ENCODE measurements at regions of chr5 and their contacts with region 1.

Region 1: GRCh38 chr5:33439905-33440481 is 772 bp upstream of the TARS1 start:
- DNase-seq: no peak
- H3K4me3 ChIP-seq: peak overlapping the region; percentile 86
- H3K27ac ChIP-seq: peak overlapping the region; percentile 39 to 93
- H3K4me1 ChIP-seq: peaks cover 6% of the 10 kb centered on the region
- H3K27me3 ChIP-seq: no peaks in the 10 kb centered on the region
- CTCF ChIP-seq: no peak
- EP300 ChIP-seq: no peak
- POLR2A ChIP-seq: no peak

Region 2: GRCh38 chr5:33008751-33009418 is 431.1 kb before region 1 on chr5:
- intact Hi-C with region 1: no loop called
- DNase-seq: no peak
- H3K4me3 ChIP-seq: no peak overlapping the region
- H3K27ac ChIP-seq: no peak overlapping the region
- H3K4me1 ChIP-seq: no peaks in the 10 kb centered on the region
- H3K27me3 ChIP-seq: no peaks in the 10 kb centered on the region
- CTCF ChIP-seq: no peak
- EP300 ChIP-seq: no peak
- POLR2A ChIP-seq: no peak

Region 3: GRCh38 chr5:33479311-33479710 is 39.3 kb after region 1 on chr5:
- intact Hi-C with region 1: no loop called
- DNase-seq: no peak
- H3K4me3 ChIP-seq: no peak overlapping the region
- H3K27ac ChIP-seq: no peak overlapping the region
- H3K4me1 ChIP-seq: no peaks in the 10 kb centered on the region
- H3K27me3 ChIP-seq: no peaks in the 10 kb centered on the region
- CTCF ChIP-seq: no peak
- EP300 ChIP-seq: no peak
- POLR2A ChIP-seq: no peak

Region 4: DNA sequence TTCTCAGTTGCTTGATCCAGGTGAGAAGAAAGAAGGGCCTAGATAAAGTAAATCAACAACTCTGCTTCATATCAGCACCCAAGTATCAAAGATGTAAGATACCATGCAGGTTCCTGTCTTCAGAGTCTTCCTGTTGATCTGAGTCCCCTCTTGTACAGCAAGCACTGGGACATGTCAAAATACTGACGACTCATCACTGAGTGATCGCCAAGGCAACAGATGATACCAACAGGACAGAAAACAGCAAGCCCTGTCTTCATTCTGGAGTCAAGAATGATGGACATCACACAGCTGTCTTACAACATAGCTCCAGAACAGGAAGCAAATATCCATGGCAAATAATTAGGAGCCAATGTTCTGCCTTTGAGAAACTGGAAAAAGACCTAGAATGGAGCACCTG is 84.5 kb after region 1 on chr5:
- intact Hi-C with region 1: no loop called
- DNase-seq: no peak
- H3K4me3 ChIP-seq: no peak overlapping the region
- H3K27ac ChIP-seq: no peak overlapping the region
- H3K4me1 ChIP-seq: no peaks in the 10 kb centered on the region
- H3K27me3 ChIP-seq: no peaks in the 10 kb centered on the region
- CTCF ChIP-seq: no peak
- EP300 ChIP-seq: no peak
- POLR2A ChIP-seq: no peak

Region 5: DNA sequence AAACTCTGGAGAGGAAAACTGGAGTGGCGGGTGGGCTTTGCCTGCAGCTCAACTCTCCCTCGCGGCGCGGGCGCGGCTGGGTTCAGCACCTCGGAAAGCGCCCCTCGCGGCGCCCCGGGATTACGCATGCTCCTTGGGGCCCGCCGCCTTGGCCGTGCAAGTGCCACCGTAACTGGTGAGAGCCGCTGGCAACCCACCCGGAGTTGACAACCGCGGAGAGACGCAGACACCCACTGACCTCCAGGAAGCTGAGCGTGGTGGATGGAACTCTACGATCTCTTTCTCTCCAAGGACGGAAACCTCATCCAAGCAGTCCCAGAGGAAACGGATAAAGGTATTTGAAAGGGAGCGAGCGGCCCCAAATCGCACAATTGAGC is 496.0 kb after region 1 on chr5:
- intact Hi-C with region 1: loop called in 1 of 4 experiments (anchors 10 kb)
- DNase-seq: peak; percentile 15 to 74 (median 48)
- H3K4me3 ChIP-seq: no peak overlapping the region
- H3K27ac ChIP-seq: no peak overlapping the region
- H3K4me1 ChIP-seq: peaks cover 9% of the 10 kb centered on the region
- H3K27me3 ChIP-seq: no peaks in the 10 kb centered on the region
- CTCF ChIP-seq: peak in 1 of 3 donors; percentile 30
- EP300 ChIP-seq: no peak
- POLR2A ChIP-seq: no peak

Region 6: DNA sequence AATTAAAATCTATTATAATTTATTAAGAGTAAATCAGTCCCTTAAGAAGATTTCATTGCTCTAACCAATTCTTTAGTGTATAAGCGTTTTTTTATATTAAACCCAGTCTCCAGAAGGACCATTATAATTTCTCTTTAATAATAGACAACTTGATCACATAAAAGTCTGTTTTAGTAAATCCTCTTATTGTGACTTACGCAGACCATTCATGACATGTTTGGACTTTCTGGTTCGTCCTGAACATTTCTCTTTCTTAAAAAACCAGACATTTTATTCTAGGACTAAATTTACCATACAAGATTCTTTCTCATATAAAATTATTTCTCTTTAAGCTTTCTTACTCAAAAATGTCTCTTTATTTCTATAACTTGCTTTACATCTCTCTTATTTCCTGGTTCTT is 1019.9 kb after region 1 on chr5:
- intact Hi-C with region 1: loop called in 1 of 4 experiments (anchors 10 kb)
- DNase-seq: no peak
- H3K4me3 ChIP-seq: no peak overlapping the region
- H3K27ac ChIP-seq: no peak overlapping the region
- H3K4me1 ChIP-seq: no peaks in the 10 kb centered on the region
- H3K27me3 ChIP-seq: no peaks in the 10 kb centered on the region
- CTCF ChIP-seq: no peak
- EP300 ChIP-seq: no peak
- POLR2A ChIP-seq: no peak

Measured in ovary (tissue), 10 donors.